PC-3 (cell line): ENCODE measurements at regions of chr12 and their contacts with region 1.

Region 1: DNA sequence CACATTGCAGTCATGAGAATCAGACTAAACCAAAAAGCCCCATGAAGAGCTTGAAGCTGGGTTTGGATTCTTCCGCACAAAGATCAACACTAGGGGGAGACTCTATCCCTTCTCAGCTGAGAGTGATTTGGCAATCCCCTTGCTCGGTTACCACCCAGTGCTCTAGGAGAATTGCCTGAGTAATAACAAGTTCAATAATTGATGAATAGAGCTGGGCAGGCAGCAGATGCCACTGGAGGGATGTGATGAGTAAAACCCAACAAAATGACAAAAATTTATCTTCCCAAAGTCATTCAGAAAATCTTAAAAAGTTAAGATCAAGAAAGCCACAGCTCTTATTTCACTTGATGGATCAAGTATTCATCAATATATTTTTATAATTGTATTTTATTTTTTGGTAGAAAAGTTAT is 185.6 kb upstream of the ARID2 start:
- DNase-seq: peak; percentile 84
- ATAC-seq: peak; percentile 91
- H3K4me3 ChIP-seq: no peak overlapping the region
- H3K27ac ChIP-seq: no peak overlapping the region
- H3K4me1 ChIP-seq: no peaks in the 10 kb centered on the region
- H3K27me3 ChIP-seq: no peaks in the 10 kb centered on the region
- CTCF ChIP-seq: peak; percentile 90

Region 2: GRCh38 chr12:45601888-45602287 is 58.0 kb after region 1 on chr12:
- CTCF ChIA-PET with region 1: no interaction called
- POLR2A ChIA-PET with region 1: no interaction called
- intact Hi-C with region 1: no loop called
- DNase-seq: no peak
- ATAC-seq: no peak
- H3K4me3 ChIP-seq: no peak overlapping the region
- H3K27ac ChIP-seq: no peak overlapping the region
- H3K4me1 ChIP-seq: no peaks in the 10 kb centered on the region
- H3K27me3 ChIP-seq: no peaks in the 10 kb centered on the region
- CTCF ChIP-seq: no peak

Region 3: DNA sequence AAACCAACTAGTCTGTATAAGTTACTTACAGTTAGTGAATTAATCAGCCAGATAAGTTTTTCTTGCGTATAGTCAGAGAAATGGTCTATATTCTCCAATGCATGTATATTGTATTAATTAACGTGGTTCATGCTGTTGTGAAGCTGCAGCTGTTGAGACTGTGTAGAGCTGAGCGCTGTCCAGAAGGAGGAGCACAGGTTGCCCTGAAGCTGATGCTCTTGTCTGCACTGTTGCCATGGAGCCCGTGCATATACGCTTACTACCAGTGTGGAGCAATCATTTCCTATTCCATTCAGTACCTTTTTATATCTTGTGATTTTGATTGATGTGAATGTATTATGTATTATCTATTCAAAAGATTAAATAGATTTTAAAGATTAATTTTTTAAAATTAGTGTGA is 111.3 kb after region 1 on chr12:
- CTCF ChIA-PET with region 1: no interaction called
- POLR2A ChIA-PET with region 1: no interaction called
- intact Hi-C with region 1: loop called (anchors 10 kb)
- DNase-seq: peak; percentile 54
- ATAC-seq: peak; percentile 98
- H3K4me3 ChIP-seq: no peak overlapping the region
- H3K27ac ChIP-seq: no peak overlapping the region
- H3K4me1 ChIP-seq: no peaks in the 10 kb centered on the region
- H3K27me3 ChIP-seq: no peaks in the 10 kb centered on the region
- CTCF ChIP-seq: peak; percentile 43; the same call in 1 of the 2 replicates

Region 4: DNA sequence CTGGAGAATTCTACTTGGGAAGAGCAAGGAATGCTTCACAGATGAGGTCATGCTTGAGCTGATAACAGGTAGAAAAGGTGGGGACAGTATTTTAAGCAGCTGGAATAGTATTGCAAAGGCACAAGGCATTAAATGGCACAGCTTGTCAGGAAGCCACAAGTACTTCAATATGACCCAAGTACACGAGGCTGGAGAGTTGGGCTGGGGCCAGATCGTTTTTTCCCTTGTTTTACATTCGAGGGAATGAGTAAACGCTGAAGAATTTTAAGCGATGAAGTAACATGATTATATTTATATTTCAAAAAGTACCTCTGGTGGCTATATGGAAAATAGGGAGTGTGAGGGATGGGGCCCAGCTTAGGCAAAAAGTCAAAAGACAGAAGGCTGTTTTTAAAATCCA is 130.7 kb after region 1 on chr12:
- CTCF ChIA-PET with region 1: no interaction called
- POLR2A ChIA-PET with region 1: no interaction called
- intact Hi-C with region 1: no loop called
- DNase-seq: peak; percentile 98
- ATAC-seq: peak; percentile 88
- H3K4me3 ChIP-seq: no peak overlapping the region
- H3K27ac ChIP-seq: no peak overlapping the region
- H3K4me1 ChIP-seq: peaks cover 25% of the 10 kb centered on the region
- H3K27me3 ChIP-seq: no peaks in the 10 kb centered on the region
- CTCF ChIP-seq: no peak

Region 5: DNA sequence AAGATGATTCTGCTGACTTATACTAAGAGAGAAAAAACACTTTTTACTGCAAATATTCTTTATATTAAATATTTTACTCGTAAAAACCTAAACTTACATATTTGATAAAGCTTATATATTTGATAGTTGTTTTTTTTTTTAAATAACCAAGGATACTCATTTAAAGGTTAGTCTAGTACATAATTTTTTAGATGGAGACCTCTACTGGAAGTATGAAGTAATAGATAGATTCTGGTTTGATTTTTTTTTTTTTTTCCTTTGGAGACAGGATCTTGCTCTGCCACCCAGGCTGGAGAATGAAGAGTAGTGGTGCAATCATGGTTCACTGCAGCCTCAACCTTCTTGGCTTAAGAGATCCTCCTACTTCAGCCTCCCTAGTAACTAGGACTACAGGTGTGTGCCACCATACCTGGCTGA is 202.0 kb after region 1 on chr12:
- CTCF ChIA-PET with region 1: interaction called, 9 read pairs
- POLR2A ChIA-PET with region 1: no interaction called
- intact Hi-C with region 1: loop called (anchors 5 kb)
- DNase-seq: peak; percentile 45
- ATAC-seq: peak; percentile 45
- H3K4me3 ChIP-seq: no peak overlapping the region
- H3K27ac ChIP-seq: no peak overlapping the region
- H3K4me1 ChIP-seq: peaks cover 14% of the 10 kb centered on the region
- H3K27me3 ChIP-seq: no peaks in the 10 kb centered on the region
- CTCF ChIP-seq: peak; percentile 58